ENCODE measurements at regions of chr9 and their contacts with region 1.

Region 1: GRCh38 chr9:19551124-19551929 is 142.5 kb downstream of the ACER2 start:
- DNase-seq: no peak
- H3K4me3 Mint-ChIP-seq: no peak overlapping the region
- H3K27ac Mint-ChIP-seq: no peak overlapping the region
- H3K4me1 Mint-ChIP-seq: peaks cover 8% of the 10 kb centered on the region
- H3K27me3 Mint-ChIP-seq: peaks cover 3% of the 10 kb centered on the region

Region 2: DNA sequence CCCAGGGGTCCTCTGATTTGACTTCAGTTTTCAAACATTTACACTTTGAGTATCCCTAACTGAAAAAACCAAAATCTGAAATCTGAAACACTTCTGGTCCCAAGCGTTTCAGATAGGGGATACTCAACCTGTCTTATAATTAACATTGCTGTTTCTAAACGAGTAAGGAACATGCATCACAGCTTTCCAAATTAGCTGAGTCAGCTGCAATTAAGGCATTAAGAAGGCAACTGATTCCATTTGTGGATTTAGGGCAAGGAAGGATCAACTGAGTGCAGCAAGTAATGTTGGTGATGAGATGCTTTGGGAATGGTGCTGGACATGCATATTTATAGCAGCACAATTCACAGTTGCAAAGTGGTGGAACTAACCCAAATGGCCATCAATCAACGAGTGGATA is 26.1 kb after region 1 on chr9:
- intact Hi-C with region 1: no loop called
- DNase-seq: no peak
- H3K4me3 Mint-ChIP-seq: no peak overlapping the region
- H3K27ac Mint-ChIP-seq: no peak overlapping the region
- H3K4me1 Mint-ChIP-seq: no peaks in the 10 kb centered on the region
- H3K27me3 Mint-ChIP-seq: peaks cover 5% of the 10 kb centered on the region

Region 3: DNA sequence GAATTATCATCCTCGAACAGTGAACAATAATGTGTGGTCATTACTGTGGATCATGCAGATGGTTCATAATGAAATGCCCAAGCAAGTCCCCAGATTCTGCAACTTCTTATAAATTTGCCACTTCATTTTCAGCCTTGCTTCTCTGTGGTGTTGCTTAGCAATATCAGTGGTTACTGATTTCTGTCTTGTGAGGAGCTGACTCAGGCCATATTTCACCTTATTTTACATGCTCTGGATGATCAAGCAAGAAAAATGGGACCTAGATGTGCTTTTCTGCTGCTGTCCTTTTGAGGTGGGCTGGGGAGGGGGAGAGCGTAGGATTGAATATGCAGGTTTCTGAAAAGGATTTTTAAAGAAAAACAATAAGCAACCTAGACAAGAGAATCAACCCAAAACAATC is 49.2 kb after region 1 on chr9:
- intact Hi-C with region 1: loop called (anchors 10 kb)
- DNase-seq: no peak
- H3K4me3 Mint-ChIP-seq: no peak overlapping the region
- H3K27ac Mint-ChIP-seq: no peak overlapping the region
- H3K4me1 Mint-ChIP-seq: no peaks in the 10 kb centered on the region
- H3K27me3 Mint-ChIP-seq: peaks cover 11% of the 10 kb centered on the region